B cell (primary cell): ENCODE measurements at regions of chr6 and their contacts with region 1.

Region 1: GRCh38 chr6:33208091-33208967 is at the start of gene RING1:
- DNase-seq: peak; percentile 92
- ATAC-seq: peak; percentile 54
- H3K4me3 ChIP-seq: peak within 1 kb of the TSS; percentile 71 to 99 (median 90)
- H3K4me3 Mint-ChIP-seq: peak within 1 kb of the TSS; percentile 88
- H3K27ac ChIP-seq: peak within 1 kb of the TSS; percentile 87 to 91
- H3K27ac Mint-ChIP-seq: peak within 1 kb of the TSS; percentile 90
- H3K4me1 ChIP-seq: peaks cover 31 to 45% of the 10 kb centered on the region in 2 donors
- H3K4me1 Mint-ChIP-seq: peaks cover 40% of the 10 kb centered on the region
- H3K27me3 ChIP-seq: peaks cover 0 to 10% (median 8%) of the 10 kb centered on the region in 4 experiments
- H3K27me3 Mint-ChIP-seq: peaks cover 9% of the 10 kb centered on the region
- CTCF ChIP-seq: no peak
- total RNA-seq, gene RING1: 43.4 and 44.2 TPM in 2 replicates

Region 2: GRCh38 chr6:32668226-32668747 is 540.0 kb before region 1 on chr6:
- CTCF ChIA-PET with region 1: no interaction called
- POLR2A ChIA-PET with region 1: no interaction called
- intact Hi-C with region 1: no loop called
- DNase-seq: peak; percentile 92
- ATAC-seq: peak; percentile 71
- H3K4me3 ChIP-seq: peak overlapping the region in 4 of 5 experiments; percentile 7 to 98 (median 62)
- H3K4me3 Mint-ChIP-seq: peak overlapping the region; percentile 68
- H3K27ac ChIP-seq: peak overlapping the region; percentile 96 to 99
- H3K27ac Mint-ChIP-seq: peak overlapping the region; percentile 96
- H3K4me1 ChIP-seq: peaks cover 20 to 26% of the 10 kb centered on the region in 2 donors
- H3K4me1 Mint-ChIP-seq: peaks cover 49% of the 10 kb centered on the region
- H3K27me3 ChIP-seq: no peaks in the 10 kb centered on the region
- H3K27me3 Mint-ChIP-seq: no peaks in the 10 kb centered on the region
- CTCF ChIP-seq: no peak

Region 3: DNA sequence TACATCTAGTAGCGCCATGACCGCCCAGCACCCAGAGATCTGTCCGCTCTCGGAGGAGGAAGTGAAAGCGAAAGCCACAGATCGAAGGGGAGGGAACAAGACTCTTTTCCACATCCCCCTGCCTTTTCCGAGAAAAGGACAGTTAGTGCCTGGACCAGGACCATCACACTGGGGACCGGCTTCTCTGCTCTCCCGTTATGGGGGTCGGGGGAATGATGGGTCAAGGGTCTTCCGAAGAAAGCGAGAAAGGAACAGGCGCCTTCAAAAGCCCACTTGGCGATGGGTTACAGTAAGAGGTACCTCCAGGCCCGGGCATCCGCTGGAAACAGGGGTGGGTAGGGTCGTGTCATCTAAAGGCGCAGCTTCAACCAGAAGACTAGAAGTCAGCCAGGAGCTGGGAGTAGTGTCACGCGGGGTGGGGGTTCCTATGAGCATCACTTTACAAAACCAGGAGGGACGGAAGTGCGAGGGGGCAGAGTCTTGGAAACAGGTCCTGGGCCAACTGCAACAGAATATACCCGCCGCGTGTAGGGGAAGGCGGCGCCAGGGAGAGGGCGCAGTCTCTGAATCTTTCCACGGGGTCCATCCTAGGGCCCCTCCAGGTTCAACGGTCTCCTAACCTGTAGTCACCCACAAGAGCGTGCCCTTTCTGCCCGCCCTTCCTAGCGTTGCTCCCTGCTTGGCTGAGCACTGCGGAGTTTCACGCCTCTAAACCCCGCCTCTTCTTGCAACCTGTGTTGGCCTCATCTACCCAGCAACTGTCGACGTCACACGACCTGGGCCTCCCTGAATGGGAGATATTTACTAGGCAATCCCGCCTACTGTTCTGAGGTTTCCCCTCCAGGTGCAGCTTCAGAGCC is 364.1 kb before region 1 on chr6 and contains the start of gene PSMB8:
- CTCF ChIA-PET with region 1: no interaction called
- POLR2A ChIA-PET with region 1: interaction called, 11 read pairs
- intact Hi-C with region 1: no loop called
- DNase-seq: peak; percentile 99
- ATAC-seq: peak; percentile 78
- H3K4me3 ChIP-seq: peak within 1 kb of the TSS; percentile 88 to 100 (median 95)
- H3K4me3 Mint-ChIP-seq: peak within 1 kb of the TSS; percentile 95
- H3K27ac ChIP-seq: peak within 1 kb of the TSS; percentile 96 to 97
- H3K27ac Mint-ChIP-seq: peak within 1 kb of the TSS; percentile 99
- H3K4me1 ChIP-seq: peaks cover 72 to 81% of the 10 kb centered on the region in 2 donors
- H3K4me1 Mint-ChIP-seq: peaks cover 86% of the 10 kb centered on the region
- H3K27me3 ChIP-seq: no peaks in the 10 kb centered on the region
- H3K27me3 Mint-ChIP-seq: no peaks in the 10 kb centered on the region
- CTCF ChIP-seq: no peak
- total RNA-seq, gene PSMB8: 127 and 129 TPM in 2 replicates

Region 4: GRCh38 chr6:33192671-33193602 is 15.4 kb before region 1 on chr6:
- CTCF ChIA-PET with region 1: interaction called, 14 read pairs
- POLR2A ChIA-PET with region 1: interaction called, 8 read pairs
- intact Hi-C with region 1: loop called (anchors 2 kb)
- DNase-seq: peak; percentile 65
- ATAC-seq: peak; percentile 52
- H3K4me3 ChIP-seq: peak overlapping the region in 4 of 5 experiments; percentile 40 to 60 (median 50)
- H3K4me3 Mint-ChIP-seq: peak overlapping the region; percentile 90
- H3K27ac ChIP-seq: no peak overlapping the region
- H3K27ac Mint-ChIP-seq: peak overlapping the region; percentile 53
- H3K4me1 ChIP-seq: peaks cover 21 to 28% of the 10 kb centered on the region in 2 donors
- H3K4me1 Mint-ChIP-seq: peaks cover 29% of the 10 kb centered on the region
- H3K27me3 ChIP-seq: peaks cover 0 to 42% (median 15%) of the 10 kb centered on the region in 4 experiments
- H3K27me3 Mint-ChIP-seq: peaks cover 22% of the 10 kb centered on the region
- CTCF ChIP-seq: no peak

Region 5: GRCh38 chr6:33812669-33813068 is 604.3 kb after region 1 on chr6:
- CTCF ChIA-PET with region 1: no interaction called
- POLR2A ChIA-PET with region 1: no interaction called
- intact Hi-C with region 1: no loop called
- DNase-seq: peak; percentile 24
- ATAC-seq: no peak
- H3K4me3 ChIP-seq: no peak overlapping the region
- H3K4me3 Mint-ChIP-seq: no peak overlapping the region
- H3K27ac ChIP-seq: no peak overlapping the region
- H3K27ac Mint-ChIP-seq: no peak overlapping the region
- H3K4me1 ChIP-seq: peaks cover 5 to 6% of the 10 kb centered on the region in 2 donors
- H3K4me1 Mint-ChIP-seq: peaks cover 3% of the 10 kb centered on the region
- H3K27me3 ChIP-seq: peaks cover 0 to 58% (median 12%) of the 10 kb centered on the region in 4 experiments
- H3K27me3 Mint-ChIP-seq: peaks cover 63% of the 10 kb centered on the region
- CTCF ChIP-seq: no peak